ENCODE measurements at regions of chr5 and their contacts with region 1.

Region 1: GRCh38 chr5:80308526-80308925 is 11.3 kb upstream of the SPZ1 start:
- DNase-seq: no peak
- ATAC-seq: no peak
- H3K4me3 ChIP-seq: no peak overlapping the region
- H3K4me3 Mint-ChIP-seq: no peak overlapping the region
- H3K27ac ChIP-seq: no peak overlapping the region
- H3K27ac Mint-ChIP-seq: no peak overlapping the region
- H3K4me1 ChIP-seq: peaks cover 6% of the 10 kb centered on the region
- H3K4me1 Mint-ChIP-seq: no peaks in the 10 kb centered on the region
- H3K27me3 ChIP-seq: no peaks in the 10 kb centered on the region
- H3K27me3 Mint-ChIP-seq: no peaks in the 10 kb centered on the region
- CTCF ChIP-seq: no peak

Region 2: GRCh38 chr5:79133657-79134451 is 1174.7 kb before region 1 on chr5:
- CTCF ChIA-PET with region 1: no interaction called
- POLR2A ChIA-PET with region 1: no interaction called
- intact Hi-C with region 1: loop called in 1 of 2 experiments (anchors 10 kb)
- DNase-seq: peak; percentile 21 to 77 (median 55)
- ATAC-seq: peak; percentile 83
- H3K4me3 ChIP-seq: peak overlapping the region; percentile 17
- H3K4me3 Mint-ChIP-seq: peak overlapping the region; percentile 70
- H3K27ac ChIP-seq: no peak overlapping the region
- H3K27ac Mint-ChIP-seq: no peak overlapping the region
- H3K4me1 ChIP-seq: peaks cover 11% of the 10 kb centered on the region
- H3K4me1 Mint-ChIP-seq: peaks cover 10% of the 10 kb centered on the region
- H3K27me3 ChIP-seq: no peaks in the 10 kb centered on the region
- H3K27me3 Mint-ChIP-seq: peaks cover 4% of the 10 kb centered on the region
- CTCF ChIP-seq: peak; percentile 62

Region 3: GRCh38 chr5:79857714-79858409 is 450.7 kb before region 1 on chr5:
- CTCF ChIA-PET with region 1: no interaction called
- POLR2A ChIA-PET with region 1: no interaction called
- intact Hi-C with region 1: loop called (anchors 5 kb)
- DNase-seq: peak; percentile 58 to 86 (median 77)
- ATAC-seq: peak; percentile 65
- H3K4me3 ChIP-seq: no peak overlapping the region
- H3K4me3 Mint-ChIP-seq: no peak overlapping the region
- H3K27ac ChIP-seq: no peak overlapping the region
- H3K27ac Mint-ChIP-seq: no peak overlapping the region
- H3K4me1 ChIP-seq: no peaks in the 10 kb centered on the region
- H3K4me1 Mint-ChIP-seq: peaks cover 4% of the 10 kb centered on the region
- H3K27me3 ChIP-seq: peaks cover 0 to 3% of the 10 kb centered on the region in 2 experiments
- H3K27me3 Mint-ChIP-seq: peaks cover 6% of the 10 kb centered on the region
- CTCF ChIP-seq: peak; percentile 96

Region 4: GRCh38 chr5:79990598-79991507 is 317.7 kb before region 1 on chr5 and contains the start of gene MTX3:
- CTCF ChIA-PET with region 1: no interaction called
- POLR2A ChIA-PET with region 1: no interaction called
- intact Hi-C with region 1: loop called in 1 of 2 experiments (anchors 10 kb)
- DNase-seq: peak; percentile 75 to 94 (median 83)
- ATAC-seq: peak; percentile 95
- H3K4me3 ChIP-seq: peak within 1 kb of the TSS; percentile 85
- H3K4me3 Mint-ChIP-seq: peak within 1 kb of the TSS; percentile 88
- H3K27ac ChIP-seq: peak within 1 kb of the TSS; percentile 59 to 68
- H3K27ac Mint-ChIP-seq: peak within 1 kb of the TSS; percentile 92
- H3K4me1 ChIP-seq: peaks cover 17% of the 10 kb centered on the region
- H3K4me1 Mint-ChIP-seq: peaks cover 18% of the 10 kb centered on the region
- H3K27me3 ChIP-seq: no peaks in the 10 kb centered on the region
- H3K27me3 Mint-ChIP-seq: peaks cover 12% of the 10 kb centered on the region
- CTCF ChIP-seq: no peak
- total RNA-seq, gene MTX3: 25.6 to 26.5 TPM

Region 5: DNA sequence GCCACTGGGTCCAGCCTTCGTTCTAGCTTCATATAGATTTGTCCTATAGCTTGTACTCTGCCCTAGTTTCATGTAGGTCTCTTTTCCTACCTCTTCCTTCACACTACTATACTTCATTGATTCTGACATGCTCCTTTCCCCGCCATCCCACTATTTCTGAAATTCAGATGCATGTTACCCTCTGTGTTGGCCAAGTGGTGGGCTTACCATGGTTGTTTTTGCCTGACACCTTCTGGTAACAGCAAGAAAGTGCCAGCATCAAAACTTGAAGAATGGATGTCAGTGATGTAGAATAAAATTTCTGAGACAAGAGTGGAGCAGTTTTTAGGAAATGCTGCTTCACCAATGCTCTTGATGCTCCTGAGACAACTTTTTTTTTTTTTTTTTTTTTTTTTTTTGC is 33.2 kb before region 1 on chr5:
- CTCF ChIA-PET with region 1: interaction called, 8 read pairs
- POLR2A ChIA-PET with region 1: no interaction called
- intact Hi-C with region 1: loop called in 1 of 2 experiments (anchors 2 kb)
- DNase-seq: peak in 5 of 14 experiments; percentile 16 to 68 (median 50)
- ATAC-seq: peak; percentile 70
- H3K4me3 ChIP-seq: no peak overlapping the region
- H3K4me3 Mint-ChIP-seq: no peak overlapping the region
- H3K27ac ChIP-seq: no peak overlapping the region
- H3K27ac Mint-ChIP-seq: peak overlapping the region; percentile 4
- H3K4me1 ChIP-seq: peaks cover 28% of the 10 kb centered on the region
- H3K4me1 Mint-ChIP-seq: peaks cover 27% of the 10 kb centered on the region
- H3K27me3 ChIP-seq: no peaks in the 10 kb centered on the region
- H3K27me3 Mint-ChIP-seq: no peaks in the 10 kb centered on the region
- CTCF ChIP-seq: peak; percentile 67

Region 6: GRCh38 chr5:80324912-80325311 is 16.4 kb after region 1 on chr5:
- CTCF ChIA-PET with region 1: no interaction called
- POLR2A ChIA-PET with region 1: no interaction called
- intact Hi-C with region 1: no loop called
- DNase-seq: no peak
- ATAC-seq: no peak
- H3K4me3 ChIP-seq: no peak overlapping the region
- H3K4me3 Mint-ChIP-seq: no peak overlapping the region
- H3K27ac ChIP-seq: no peak overlapping the region
- H3K27ac Mint-ChIP-seq: no peak overlapping the region
- H3K4me1 ChIP-seq: no peaks in the 10 kb centered on the region
- H3K4me1 Mint-ChIP-seq: no peaks in the 10 kb centered on the region
- H3K27me3 ChIP-seq: peaks cover 0 to 2% of the 10 kb centered on the region in 2 experiments
- H3K27me3 Mint-ChIP-seq: peaks cover 9% of the 10 kb centered on the region
- CTCF ChIP-seq: no peak